Adrenal gland (tissue), 19 donors: ENCODE measurements at regions of chr1 and their contacts with region 1.

Region 1: GRCh38 chr1:168613691-168614231 is 37.4 kb downstream of the XCL1 start:
- DNase-seq: peak in 3 of 7 donors; percentile 17 to 66 (median 25)
- H3K4me3 ChIP-seq: no peak overlapping the region
- H3K27ac ChIP-seq: no peak overlapping the region
- H3K4me1 ChIP-seq: peaks cover 0 to 17% of the 10 kb centered on the region in 2 donors
- H3K27me3 ChIP-seq: no peaks in the 10 kb centered on the region
- CTCF ChIP-seq: no peak
- POLR2A ChIP-seq: no peak

Region 2: DNA sequence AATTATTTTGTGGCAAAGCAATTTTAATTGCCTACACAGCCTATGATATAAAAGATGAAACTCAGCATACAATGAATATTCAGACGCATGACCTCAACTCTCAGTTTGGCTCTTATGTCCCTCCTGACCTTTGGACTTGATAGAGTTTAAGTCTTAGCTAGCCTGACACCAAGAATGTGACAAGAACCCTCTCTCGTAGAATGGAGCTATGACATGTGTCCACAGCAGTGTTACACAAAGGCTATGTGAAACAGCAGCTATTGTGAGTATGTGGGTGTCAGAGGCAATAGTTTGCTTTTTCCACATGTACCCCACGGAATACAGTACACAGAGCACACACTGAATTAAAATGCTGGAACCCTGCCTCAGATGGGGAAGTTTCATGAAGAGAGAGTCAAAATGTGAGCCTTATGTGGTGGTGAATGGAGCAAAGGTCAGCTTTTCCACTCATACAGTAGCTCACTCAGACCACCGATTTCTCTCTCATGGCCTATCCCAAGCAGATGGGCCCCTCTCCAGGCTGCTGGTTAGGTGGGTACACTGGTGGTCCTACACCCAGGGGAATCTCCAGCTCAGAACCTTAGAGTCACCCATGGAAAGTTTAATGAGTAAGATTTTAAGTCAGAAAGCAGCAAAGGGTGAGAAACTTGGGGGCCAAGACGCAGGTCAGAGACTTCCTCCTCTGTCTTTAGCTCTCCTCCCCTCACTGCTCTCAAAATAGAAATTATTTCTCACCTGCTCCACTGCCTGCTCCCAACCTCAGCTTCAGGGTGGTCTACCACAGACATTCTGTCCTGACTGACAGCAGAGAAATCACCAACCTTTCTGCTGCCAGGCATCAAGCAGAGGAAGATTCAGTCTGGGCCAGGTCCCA is 59.8 kb before region 1 on chr1:
- intact Hi-C with region 1: no loop called
- DNase-seq: no peak
- H3K4me3 ChIP-seq: no peak overlapping the region
- H3K27ac ChIP-seq: no peak overlapping the region
- H3K4me1 ChIP-seq: no peaks in the 10 kb centered on the region
- H3K27me3 ChIP-seq: no peaks in the 10 kb centered on the region
- CTCF ChIP-seq: no peak
- POLR2A ChIP-seq: no peak

Region 3: DNA sequence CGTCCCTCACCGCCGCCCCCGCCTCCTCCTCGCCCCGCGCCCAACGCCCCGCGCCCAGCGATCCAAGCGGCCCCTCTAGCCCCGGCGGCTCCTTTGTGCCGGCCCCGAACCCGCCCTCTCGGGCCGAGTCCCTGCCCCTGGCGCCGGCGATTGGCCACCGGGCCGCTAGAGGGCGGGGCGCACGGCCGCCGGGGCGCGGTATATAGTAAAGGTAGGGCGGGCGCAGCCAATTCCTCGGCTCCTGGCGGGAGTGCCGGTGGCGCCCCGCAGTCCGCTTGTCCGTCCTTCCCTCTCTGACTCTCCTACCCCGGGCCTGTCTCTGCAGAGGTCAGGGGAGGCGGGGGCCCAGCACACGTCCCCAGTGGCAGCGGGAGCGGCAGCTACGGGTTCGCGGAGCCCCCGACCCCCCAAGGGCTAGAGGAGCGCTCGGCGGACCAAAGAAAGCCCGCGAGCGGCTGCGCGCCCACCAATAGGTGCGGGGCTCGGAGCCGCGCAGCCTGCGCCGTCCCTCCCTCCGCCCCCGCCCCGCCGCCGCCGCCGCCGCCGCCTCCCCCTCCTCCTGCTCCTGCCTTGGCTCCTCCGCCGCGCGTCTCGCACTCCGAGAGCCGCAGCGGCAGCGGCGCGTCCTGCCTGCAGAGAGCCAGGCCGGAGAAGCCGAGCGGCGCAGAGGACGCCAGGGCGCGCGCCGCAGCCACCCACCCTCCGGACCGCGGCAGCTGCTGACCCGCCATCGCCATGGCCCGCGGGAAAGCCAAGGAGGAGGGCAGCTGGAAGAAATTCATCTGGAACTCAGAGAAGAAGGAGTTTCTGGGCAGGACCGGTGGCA is 492.5 kb after region 1 on chr1 and contains the start of gene ATP1B1:
- intact Hi-C with region 1: loop called in 1 of 2 experiments (anchors 10 kb)
- DNase-seq: peak; percentile 87 to 95 (median 90)
- H3K4me3 ChIP-seq: peak within 1 kb of the TSS; percentile 54 to 98 (median 76)
- H3K27ac ChIP-seq: peak within 1 kb of the TSS; percentile 61 to 95 (median 88)
- H3K4me1 ChIP-seq: peaks cover 38 to 57% of the 10 kb centered on the region in 2 donors
- H3K27me3 ChIP-seq: no peaks in the 10 kb centered on the region
- CTCF ChIP-seq: peak in 5 of 6 experiments; percentile 46 to 94 (median 73)
- POLR2A ChIP-seq: peak; percentile 98 to 99
- total RNA-seq, gene ATP1B1: 51.4 to 187 (median 157) TPM